Common myeloid progenitor, CD34-positive (primary cell): ENCODE measurements at regions of chr2 and their contacts with region 1.

Region 1: DNA sequence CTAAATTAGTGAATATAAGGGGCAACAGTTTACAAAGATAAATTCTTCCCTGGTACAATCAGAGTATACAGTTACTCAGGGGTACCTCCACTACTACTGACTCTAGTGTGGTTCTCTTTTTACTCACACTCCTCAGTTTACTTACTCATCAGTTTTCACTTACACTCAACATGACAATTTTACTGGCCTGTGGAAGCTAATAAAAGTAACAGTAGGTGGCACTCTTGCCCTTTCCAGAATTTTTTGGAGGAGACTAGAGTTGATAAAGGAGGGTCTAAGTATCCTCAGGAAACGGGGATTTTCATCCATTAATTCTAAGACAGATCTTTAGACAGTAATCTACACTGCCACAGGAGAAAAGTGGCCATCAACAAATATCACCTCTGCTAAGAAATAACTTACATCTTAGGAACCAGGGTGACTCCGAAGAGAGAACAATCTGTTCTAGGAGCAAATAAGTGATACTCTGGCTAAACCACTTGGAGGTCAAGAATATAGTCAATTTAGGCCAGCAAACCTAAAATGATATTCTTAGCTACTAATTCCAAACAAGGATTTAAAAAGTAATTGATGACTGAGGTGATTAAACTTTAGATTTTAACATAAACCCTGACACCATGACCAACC is 61.3 kb downstream of the ATL2 start:
- DNase-seq: peak; percentile 43 to 61 (median 51)
- H3K4me3 ChIP-seq: no peak overlapping the region
- H3K27ac ChIP-seq: no peak overlapping the region
- H3K4me1 ChIP-seq: no peaks in the 10 kb centered on the region
- H3K27me3 ChIP-seq: no peaks in the 10 kb centered on the region

Region 2: DNA sequence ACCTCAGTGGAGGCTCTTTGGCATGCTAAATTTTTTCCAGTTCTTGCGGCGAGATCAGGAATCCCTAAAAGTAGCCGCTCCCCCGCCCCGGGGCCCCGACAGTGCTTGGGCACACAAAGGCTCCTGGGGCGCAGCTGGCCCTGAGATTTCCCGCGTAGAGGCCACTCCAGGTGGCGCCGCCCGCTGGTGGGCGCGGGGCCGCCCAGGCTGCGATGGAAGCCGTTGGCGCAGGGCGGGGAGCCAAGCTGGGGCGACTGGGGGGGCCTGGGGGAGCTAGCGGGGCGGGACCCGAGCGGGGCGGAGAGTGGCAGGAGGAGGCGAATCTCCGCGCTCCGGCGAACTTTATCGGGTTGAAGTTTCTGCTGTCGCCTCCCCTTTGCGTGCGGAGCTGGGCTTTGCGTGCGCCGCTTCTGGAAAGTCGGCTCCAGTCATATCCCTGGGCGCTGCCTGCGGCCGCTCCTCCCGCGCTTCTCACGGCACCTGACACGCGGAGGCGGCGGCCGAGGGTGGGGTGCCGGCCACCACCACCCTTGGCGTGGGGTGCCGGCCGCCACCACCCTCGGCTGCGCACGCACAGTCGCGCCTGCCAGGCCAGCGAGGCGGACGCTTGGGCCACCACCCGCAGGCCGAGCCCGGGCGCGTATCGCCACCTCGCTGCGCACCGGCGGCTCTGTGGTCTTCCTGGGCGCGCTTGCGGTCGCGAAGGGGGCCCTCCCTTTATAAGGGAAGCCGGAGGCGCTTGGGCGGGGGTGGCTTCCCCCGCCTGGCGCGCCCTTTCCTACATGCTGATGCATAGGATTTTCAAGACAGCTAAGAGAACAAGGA is 239.0 kb before region 1 on chr2:
- CTCF ChIA-PET with region 1: no interaction called
- POLR2A ChIA-PET with region 1: no interaction called
- DNase-seq: peak; percentile 87 to 89 (median 88)
- H3K4me3 ChIP-seq: peak overlapping the region; percentile 6 to 74 (median 61)
- H3K27ac ChIP-seq: no peak overlapping the region
- H3K4me1 ChIP-seq: peaks cover 2 to 50% (median 40%) of the 10 kb centered on the region in 4 experiments
- H3K27me3 ChIP-seq: peaks cover 12 to 89% (median 46%) of the 10 kb centered on the region in 5 experiments

Region 3: DNA sequence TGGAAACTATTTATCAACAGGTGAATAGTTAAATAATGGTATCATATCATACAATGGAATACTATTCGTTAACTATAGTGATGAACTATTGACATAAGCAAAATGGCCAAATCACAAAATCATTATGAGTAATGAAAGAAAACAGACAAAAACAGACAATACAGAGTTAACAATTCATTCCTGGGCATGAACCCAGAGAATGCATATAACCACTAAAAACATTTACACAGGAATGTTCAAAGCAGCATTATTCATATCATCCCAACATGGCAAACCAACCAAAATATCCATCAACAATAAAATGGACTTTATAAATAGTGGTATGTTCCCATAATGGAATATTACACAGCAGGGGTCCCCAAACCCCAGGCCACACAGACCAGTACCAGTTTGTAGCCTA is 108.7 kb before region 1 on chr2:
- CTCF ChIA-PET with region 1: no interaction called
- POLR2A ChIA-PET with region 1: no interaction called
- DNase-seq: no peak
- H3K4me3 ChIP-seq: no peak overlapping the region
- H3K27ac ChIP-seq: no peak overlapping the region
- H3K4me1 ChIP-seq: no peaks in the 10 kb centered on the region
- H3K27me3 ChIP-seq: peaks cover 6 to 39% (median 13%) of the 10 kb centered on the region in 5 experiments

Region 4: GRCh38 chr2:38377050-38377828 is 61.4 kb after region 1 on chr2 and contains the start of gene ATL2:
- CTCF ChIA-PET with region 1: interaction called, 22 read pairs
- POLR2A ChIA-PET with region 1: no interaction called
- DNase-seq: peak; percentile 95 to 98 (median 97)
- H3K4me3 ChIP-seq: peak within 1 kb of the TSS; percentile 79 to 96 (median 89)
- H3K27ac ChIP-seq: peak within 1 kb of the TSS; percentile 80 to 93
- H3K4me1 ChIP-seq: peaks cover 7 to 40% (median 27%) of the 10 kb centered on the region in 4 experiments
- H3K27me3 ChIP-seq: no peaks in the 10 kb centered on the region

Region 5: GRCh38 chr2:38465789-38466127 is 149.9 kb after region 1 on chr2:
- CTCF ChIA-PET with region 1: interaction called, 100 read pairs
- POLR2A ChIA-PET with region 1: no interaction called
- DNase-seq: peak; percentile 58 to 69 (median 64)
- H3K4me3 ChIP-seq: no peak overlapping the region
- H3K27ac ChIP-seq: no peak overlapping the region
- H3K4me1 ChIP-seq: peaks cover 0 to 2% (median 0%) of the 10 kb centered on the region in 4 experiments
- H3K27me3 ChIP-seq: peaks cover 0 to 3% (median 0%) of the 10 kb centered on the region in 5 experiments

Region 6: GRCh38 chr2:38508311-38509039 is 192.7 kb after region 1 on chr2:
- CTCF ChIA-PET with region 1: interaction called, 50 read pairs
- POLR2A ChIA-PET with region 1: no interaction called
- DNase-seq: peak; percentile 82 to 90 (median 87)
- H3K4me3 ChIP-seq: no peak overlapping the region
- H3K27ac ChIP-seq: no peak overlapping the region
- H3K4me1 ChIP-seq: no peaks in the 10 kb centered on the region
- H3K27me3 ChIP-seq: no peaks in the 10 kb centered on the region

Region 7: DNA sequence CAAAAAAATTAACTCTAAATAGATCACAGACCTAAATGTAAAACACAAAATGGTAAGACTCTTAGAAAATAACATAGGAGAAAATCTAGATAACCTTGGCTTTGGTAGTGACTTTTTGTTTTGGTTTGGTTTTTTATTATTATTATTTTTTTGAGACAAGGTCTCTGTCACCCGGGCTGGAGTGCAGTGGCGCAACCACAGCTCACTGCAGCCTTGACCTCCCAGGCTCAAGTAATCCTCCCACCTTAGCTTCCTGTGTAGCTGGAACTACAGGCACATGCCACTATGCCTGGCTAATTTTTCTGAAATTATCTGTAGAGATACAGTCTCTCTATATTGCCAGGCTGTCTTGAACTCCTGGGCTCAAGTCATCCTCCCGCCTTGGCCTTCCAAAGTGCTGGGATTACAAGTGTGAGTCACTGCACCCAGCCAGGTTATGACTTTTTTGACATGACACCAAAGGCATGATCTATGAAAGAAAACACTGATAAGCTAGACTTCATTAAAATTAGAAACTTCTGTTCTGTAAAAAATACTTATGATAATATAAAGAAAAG is 198.9 kb after region 1 on chr2:
- CTCF ChIA-PET with region 1: interaction called, 50 read pairs
- POLR2A ChIA-PET with region 1: no interaction called
- DNase-seq: no peak
- H3K4me3 ChIP-seq: no peak overlapping the region
- H3K27ac ChIP-seq: peak overlapping the region in 1 of 2 experiments; percentile 2
- H3K4me1 ChIP-seq: no peaks in the 10 kb centered on the region
- H3K27me3 ChIP-seq: no peaks in the 10 kb centered on the region